Activated CD8-positive, alpha-beta memory T cell treated with anti-CD3 and anti-CD28 coated beads, Interleukin-2, amount 10 ng/mL, durations not matched to agents 7 days and 5 days (primary cell): ENCODE measurements at regions of chr7 and their contacts with region 1.

Region 1: GRCh38 chr7:22782616-22783232 is 39.9 kb downstream of the TOMM7 start:
- DNase-seq: peak; percentile 82
- ATAC-seq: peak; percentile 91
- H3K4me3 Mint-ChIP-seq: no peak overlapping the region
- H3K27ac Mint-ChIP-seq: no peak overlapping the region
- H3K4me1 Mint-ChIP-seq: no peaks in the 10 kb centered on the region
- H3K27me3 Mint-ChIP-seq: peaks cover 15% of the 10 kb centered on the region

Region 2: GRCh38 chr7:22559829-22560489 is 222.8 kb before region 1 on chr7:
- CTCF ChIA-PET with region 1: interaction called, 52 read pairs
- DNase-seq: peak; percentile 79
- ATAC-seq: peak; percentile 72
- H3K4me3 Mint-ChIP-seq: no peak overlapping the region
- H3K27ac Mint-ChIP-seq: no peak overlapping the region
- H3K4me1 Mint-ChIP-seq: peaks cover 36% of the 10 kb centered on the region
- H3K27me3 Mint-ChIP-seq: peaks cover 38% of the 10 kb centered on the region

Region 3: DNA sequence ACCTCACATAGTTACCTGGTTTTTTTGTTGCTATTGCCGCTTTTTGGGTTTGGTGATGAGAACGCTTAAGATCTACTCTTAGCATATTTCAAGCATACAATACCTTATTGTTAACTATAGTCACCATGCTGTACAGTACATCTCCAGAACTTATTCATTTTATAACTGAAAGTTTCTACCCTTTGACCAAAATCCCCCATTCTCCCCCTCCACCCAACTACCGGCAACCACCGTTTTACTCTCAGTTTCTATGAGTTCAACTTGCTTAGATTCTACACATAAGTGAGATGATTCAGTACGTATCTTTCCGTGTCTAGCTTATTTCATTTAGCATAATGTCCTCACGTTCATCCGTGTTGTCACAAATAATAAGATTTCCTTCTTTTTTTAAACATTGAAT is 142.5 kb before region 1 on chr7:
- CTCF ChIA-PET with region 1: no interaction called
- DNase-seq: peak; percentile 74
- ATAC-seq: peak; percentile 70
- H3K4me3 Mint-ChIP-seq: no peak overlapping the region
- H3K27ac Mint-ChIP-seq: no peak overlapping the region
- H3K4me1 Mint-ChIP-seq: peaks cover 19% of the 10 kb centered on the region
- H3K27me3 Mint-ChIP-seq: peaks cover 57% of the 10 kb centered on the region